ENCODE measurements at regions of chr6 and their contacts with region 1.

Region 1: DNA sequence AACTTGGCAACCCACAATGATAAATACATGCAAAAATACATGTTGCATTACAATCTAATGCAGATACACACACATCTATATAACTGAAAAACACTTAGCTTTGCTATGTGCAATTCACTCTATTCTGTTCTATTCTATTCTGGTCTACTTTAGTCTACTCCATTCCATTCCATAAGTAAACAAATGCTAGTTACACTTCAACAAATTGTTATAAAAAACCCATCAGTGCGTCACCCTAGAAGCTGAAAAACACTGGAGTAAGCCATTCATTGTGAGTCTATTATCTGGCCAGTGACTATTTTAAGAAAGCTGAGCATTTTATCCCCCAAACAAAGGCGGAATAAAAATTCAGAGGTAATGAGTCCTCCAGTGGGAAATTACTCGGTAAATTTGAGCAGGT is 315.7 kb upstream of the EPHA7 start:
- DNase-seq: no peak
- H3K4me3 ChIP-seq: no peak overlapping the region
- H3K27ac ChIP-seq: no peak overlapping the region
- H3K4me1 ChIP-seq: no peaks in the 10 kb centered on the region
- H3K27me3 ChIP-seq: no peaks in the 10 kb centered on the region
- CTCF ChIP-seq: no peak

Region 2: DNA sequence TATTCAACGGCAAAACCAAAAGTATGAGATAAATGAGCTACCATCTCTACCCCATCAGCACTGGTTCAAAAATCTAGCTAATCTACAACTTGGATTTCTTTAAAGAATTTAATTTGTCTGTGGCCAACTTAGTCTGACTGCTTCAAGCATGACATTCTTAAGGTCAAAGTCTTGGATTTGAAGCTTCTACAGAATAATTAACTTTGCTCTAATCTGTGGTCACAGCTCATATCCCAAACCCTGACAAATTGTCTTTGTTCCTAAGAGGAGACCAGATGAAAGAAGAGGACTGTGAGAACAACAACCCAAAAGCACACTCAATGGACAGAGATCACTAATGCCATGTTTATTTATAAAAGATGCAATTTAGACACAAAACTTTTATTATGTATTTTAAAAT is 148.8 kb before region 1 on chr6:
- CTCF ChIA-PET with region 1: no interaction called
- POLR2A ChIA-PET with region 1: interaction called, 11 read pairs
- intact Hi-C with region 1: no loop called
- DNase-seq: no peak
- H3K4me3 ChIP-seq: no peak overlapping the region
- H3K27ac ChIP-seq: no peak overlapping the region
- H3K4me1 ChIP-seq: no peaks in the 10 kb centered on the region
- H3K27me3 ChIP-seq: no peaks in the 10 kb centered on the region
- CTCF ChIP-seq: no peak